Activated naive CD8-positive, alpha-beta T cell treated with anti-CD3 and anti-CD28 coated beads, Interleukin-2, amount 10 ng/mL, durations not matched to agents 7 days and 5 days (primary cell): ENCODE measurements at regions of chr4 and their contacts with region 1.

Region 1: DNA sequence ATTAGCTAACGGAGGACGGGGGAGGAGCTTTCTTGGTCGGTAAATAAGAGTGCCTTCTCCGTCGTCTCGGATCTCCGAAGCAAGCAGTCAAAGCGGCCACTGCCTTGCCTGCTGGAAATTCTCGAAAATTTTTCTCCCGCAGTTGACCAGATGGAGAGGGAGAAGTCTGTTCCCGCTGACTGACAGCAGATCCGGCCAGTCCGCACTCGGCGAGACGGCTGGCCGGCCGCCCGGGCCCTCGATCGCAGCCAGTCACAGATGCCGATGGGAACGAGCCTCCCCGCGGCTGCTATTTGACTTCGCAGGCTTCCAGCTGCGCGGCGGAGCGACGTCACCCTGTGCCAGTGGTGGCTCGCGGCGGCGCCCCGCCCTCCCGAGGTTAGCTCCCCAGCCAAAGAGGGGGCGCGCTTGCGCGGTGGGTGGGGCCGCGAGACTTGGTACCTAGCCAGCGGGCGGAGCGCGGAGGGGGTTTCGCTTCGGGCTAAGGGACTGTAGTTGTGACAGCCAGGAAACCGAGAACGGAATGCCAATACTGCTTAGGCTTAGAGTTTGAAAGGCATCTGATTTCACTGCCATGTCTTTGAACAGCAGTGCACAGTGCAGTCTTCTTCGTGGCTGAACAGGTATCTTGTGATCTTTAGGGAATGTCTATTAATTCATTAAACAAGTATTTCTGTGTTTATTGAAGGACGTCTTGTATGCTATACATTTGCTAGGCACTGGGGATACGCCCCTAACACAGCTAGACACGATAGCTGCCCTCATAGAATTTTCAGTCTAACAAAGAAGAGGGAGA is at the start of gene PPM1K:
- DNase-seq: peak; percentile 99
- ATAC-seq: peak; percentile 91
- H3K4me3 Mint-ChIP-seq: peak within 1 kb of the TSS; percentile 95
- H3K27ac Mint-ChIP-seq: peak within 1 kb of the TSS; percentile 92
- H3K4me1 Mint-ChIP-seq: peaks cover 31% of the 10 kb centered on the region
- H3K27me3 Mint-ChIP-seq: no peaks in the 10 kb centered on the region
- total RNA-seq, gene PPM1K: 81.4 to 82.7 TPM

Region 2: DNA sequence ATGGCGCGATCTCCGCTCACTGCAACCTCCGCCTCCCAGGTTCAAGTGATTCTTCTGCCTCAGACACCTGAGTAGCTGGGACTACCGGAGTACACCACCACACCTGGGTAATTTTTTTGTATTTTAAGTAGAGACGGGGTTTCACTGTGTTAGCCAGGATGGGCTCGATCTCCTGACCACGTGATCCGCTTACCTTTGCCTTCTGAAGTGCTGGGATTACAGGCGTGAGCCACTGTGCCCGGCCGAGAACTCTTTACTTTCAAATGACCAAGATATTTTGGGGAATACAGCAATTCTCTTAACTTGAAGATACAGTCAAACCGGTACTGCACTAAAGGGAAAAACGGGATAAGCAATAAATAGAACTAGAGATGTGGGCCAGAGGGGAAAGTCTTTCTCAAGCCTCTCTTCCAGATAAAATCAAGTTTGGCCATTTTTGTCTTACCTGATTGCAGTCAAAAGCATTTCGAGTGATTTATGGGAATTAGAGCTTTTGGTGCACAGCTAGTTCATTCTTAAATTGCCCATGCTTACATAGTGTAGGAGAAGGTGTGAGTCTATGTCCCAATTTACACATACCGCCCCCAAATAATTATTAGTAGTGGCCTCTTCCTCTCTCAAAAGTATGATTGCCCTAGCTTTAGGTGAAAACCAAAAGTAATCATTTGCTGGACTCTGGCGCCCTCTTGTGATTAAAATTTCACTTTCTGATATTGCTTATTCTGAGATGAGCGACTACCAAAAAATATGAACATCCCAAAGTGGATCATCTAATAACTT is 73.0 kb before region 1 on chr4:
- POLR2A ChIA-PET with region 1: no interaction called
- DNase-seq: no peak
- ATAC-seq: no peak
- H3K4me3 Mint-ChIP-seq: no peak overlapping the region
- H3K27ac Mint-ChIP-seq: no peak overlapping the region
- H3K4me1 Mint-ChIP-seq: peaks cover 5% of the 10 kb centered on the region
- H3K27me3 Mint-ChIP-seq: peaks cover 5% of the 10 kb centered on the region

Region 3: DNA sequence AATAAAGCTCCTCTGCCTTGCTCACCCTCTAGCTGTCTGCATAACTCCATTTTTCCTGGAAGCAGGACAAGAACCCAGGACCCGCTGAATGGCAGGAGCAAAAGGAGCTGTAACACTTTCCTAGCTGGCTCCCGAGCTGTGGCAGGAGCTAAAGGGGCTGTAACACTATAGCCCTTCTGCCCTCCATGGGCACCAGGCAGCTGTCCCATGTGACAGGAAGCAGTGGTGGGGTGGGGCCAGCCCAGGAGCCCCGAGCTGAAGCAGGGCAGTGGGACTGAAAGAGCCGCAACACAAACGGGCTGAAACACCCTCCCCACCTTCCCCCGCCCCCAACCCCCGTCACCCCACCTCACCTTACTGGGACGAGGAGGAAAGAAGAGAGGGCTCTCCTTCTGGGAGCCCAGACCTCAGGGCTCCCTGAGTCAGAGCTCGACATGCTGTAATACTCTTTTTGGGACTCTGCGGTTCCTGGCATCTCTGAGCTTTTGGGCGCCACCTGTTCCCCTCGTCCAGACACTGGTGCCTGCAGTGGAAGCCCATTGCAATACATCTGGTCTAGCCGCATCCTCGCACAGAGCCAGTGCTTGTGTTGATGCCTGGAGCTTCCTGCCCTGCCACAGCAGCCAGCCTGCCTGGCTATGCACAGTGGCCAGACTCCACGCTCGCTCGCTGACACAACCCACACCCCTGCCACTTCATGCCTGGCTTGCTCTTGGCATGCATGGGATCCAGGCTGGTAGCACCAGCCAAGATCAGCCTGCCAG is 39.6 kb before region 1 on chr4:
- POLR2A ChIA-PET with region 1: interaction called, 25 read pairs
- DNase-seq: peak; percentile 61
- ATAC-seq: peak; percentile 95
- H3K4me3 Mint-ChIP-seq: peak overlapping the region; percentile 67
- H3K27ac Mint-ChIP-seq: peak overlapping the region; percentile 83
- H3K4me1 Mint-ChIP-seq: peaks cover 13% of the 10 kb centered on the region
- H3K27me3 Mint-ChIP-seq: peaks cover 7% of the 10 kb centered on the region

Region 4: GRCh38 chr4:88297725-88298454 is 13.3 kb after region 1 on chr4:
- POLR2A ChIA-PET with region 1: interaction called, 10 read pairs
- DNase-seq: no peak
- ATAC-seq: no peak
- H3K4me3 Mint-ChIP-seq: no peak overlapping the region
- H3K27ac Mint-ChIP-seq: no peak overlapping the region
- H3K4me1 Mint-ChIP-seq: peaks cover 4% of the 10 kb centered on the region
- H3K27me3 Mint-ChIP-seq: no peaks in the 10 kb centered on the region

Region 5: GRCh38 chr4:88320780-88321373 is 36.2 kb after region 1 on chr4:
- POLR2A ChIA-PET with region 1: interaction called, 79 read pairs
- DNase-seq: peak; percentile 54
- ATAC-seq: peak; percentile 95
- H3K4me3 Mint-ChIP-seq: peak overlapping the region; percentile 88
- H3K27ac Mint-ChIP-seq: peak overlapping the region; percentile 98
- H3K4me1 Mint-ChIP-seq: peaks cover 23% of the 10 kb centered on the region
- H3K27me3 Mint-ChIP-seq: no peaks in the 10 kb centered on the region

Region 6: DNA sequence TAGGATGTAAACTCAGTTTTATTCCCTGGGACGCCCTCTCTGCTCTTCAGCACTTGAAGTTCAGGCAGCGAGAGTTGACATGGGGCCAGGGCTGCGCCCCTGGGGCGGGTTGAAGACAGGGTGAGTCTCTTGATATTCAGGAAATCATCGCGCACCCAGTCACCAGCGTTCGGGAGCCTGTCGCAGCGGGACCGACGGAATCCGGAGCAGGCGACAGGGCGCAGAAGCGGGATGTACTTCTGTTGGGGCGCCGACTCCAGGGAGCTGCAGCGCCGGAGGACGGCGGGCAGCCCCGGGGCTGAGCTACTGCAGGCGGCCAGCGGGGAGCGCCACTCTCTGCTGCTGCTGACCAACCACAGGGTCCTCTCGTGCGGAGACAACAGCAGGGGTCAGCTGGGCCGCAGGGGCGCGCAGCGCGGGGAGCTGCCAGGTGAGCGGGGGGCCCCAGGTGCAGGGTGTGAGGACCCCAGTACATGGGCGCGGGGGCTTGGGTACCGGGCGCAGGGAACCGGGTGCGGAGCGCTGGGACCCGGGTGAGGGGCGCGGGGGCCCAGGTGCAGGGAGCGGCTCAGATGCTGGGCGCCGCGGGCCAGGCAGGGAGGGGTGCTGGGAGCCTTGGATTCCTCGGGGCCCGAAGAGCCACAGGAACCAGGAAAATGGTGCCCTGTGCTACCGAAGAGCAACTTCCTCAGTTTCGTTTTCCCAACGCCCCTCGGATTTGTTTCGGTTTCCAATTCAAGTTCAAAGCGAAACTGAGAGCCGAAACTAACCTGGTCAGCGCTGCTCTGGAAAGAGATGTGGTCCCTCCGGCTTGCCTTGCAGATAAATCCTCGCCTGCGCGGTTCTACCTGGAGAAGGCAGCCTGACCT is 94.3 kb after region 1 on chr4 and contains the start of gene HERC6:
- POLR2A ChIA-PET with region 1: interaction called, 58 read pairs
- DNase-seq: peak; percentile 83
- ATAC-seq: peak; percentile 58
- H3K4me3 Mint-ChIP-seq: peak within 1 kb of the TSS; percentile 91
- H3K27ac Mint-ChIP-seq: peak within 1 kb of the TSS; percentile 96
- H3K4me1 Mint-ChIP-seq: peaks cover 48% of the 10 kb centered on the region
- H3K27me3 Mint-ChIP-seq: no peaks in the 10 kb centered on the region
- total RNA-seq, gene HERC6: 36.0 to 36.5 TPM